ENCODE measurements at regions of chr17 and their contacts with region 1.

Region 1: DNA sequence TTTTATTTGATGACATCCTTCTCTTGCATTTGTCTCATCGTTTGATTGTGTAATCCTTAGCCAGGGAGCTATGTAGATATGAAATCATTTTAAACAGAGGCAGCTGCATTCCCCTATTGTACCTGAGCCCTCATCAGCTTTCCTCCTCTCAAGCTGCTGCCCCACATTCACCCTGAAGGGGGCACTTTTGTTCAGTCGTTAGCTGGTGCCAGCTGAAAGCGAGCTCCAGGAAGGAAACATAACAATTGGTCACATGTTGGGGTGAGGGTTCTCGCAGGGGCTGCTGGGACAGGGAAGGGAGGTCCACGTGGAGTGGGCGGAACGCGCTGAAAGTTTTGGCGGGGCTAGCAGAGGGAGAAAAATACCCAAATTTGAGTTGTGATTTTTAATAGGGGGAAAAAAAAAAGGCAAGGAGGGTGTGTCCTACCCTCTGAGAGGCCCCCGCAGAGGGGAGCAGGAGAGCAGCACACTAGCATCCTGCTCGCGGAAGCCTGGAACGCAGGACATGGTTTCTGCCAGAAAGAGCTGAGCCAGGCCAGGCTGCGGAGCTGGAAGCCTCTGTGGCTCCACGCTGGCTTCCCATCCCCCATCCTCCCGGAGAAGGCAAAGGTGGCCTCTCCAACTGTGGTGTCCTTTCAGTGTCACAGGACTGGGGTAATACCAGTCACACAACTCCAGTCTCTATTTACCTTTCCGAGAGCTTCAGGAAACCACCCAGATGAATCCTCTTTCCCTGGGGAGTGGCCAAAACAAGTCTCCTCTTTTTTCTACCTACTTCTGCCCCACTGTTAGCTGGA is 8.5 kb upstream of the MSL1 start:
- DNase-seq: peak; percentile 93
- H3K4me3 ChIP-seq: peak overlapping the region; percentile 26 to 43 (median 34)
- H3K27ac ChIP-seq: peak overlapping the region; percentile 70
- H3K4me1 ChIP-seq: peaks cover 45% of the 10 kb centered on the region
- H3K27me3 ChIP-seq: no peaks in the 10 kb centered on the region
- CTCF ChIP-seq: peak; percentile 51 to 90

Region 2: DNA sequence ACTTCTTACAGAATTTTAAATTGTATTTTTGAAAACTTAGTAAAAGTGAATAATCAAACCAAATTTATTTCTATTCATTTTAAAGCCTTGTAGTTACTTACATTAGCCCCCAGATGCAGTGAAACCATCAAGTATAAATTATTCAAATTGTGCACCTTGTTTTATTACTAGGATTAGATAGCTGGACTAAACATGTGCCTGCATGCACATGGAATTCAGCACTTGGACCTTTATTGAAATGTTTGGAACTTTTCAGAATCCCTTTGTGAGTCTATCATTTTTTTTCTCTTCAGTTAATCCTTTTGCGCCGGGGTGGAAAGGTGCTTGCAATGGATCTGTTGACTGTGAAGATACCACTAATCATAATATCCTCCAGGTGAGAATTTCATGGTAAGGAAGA is 240.6 kb before region 1 on chr17:
- CTCF ChIA-PET with region 1: no interaction called
- dilution Hi-C with region 1: no loop called
- in situ Hi-C with region 1: no loop called
- intact Hi-C with region 1: loop called (anchors 1 kb)
- DNase-seq: peak; percentile 32
- H3K4me3 ChIP-seq: no peak overlapping the region
- H3K27ac ChIP-seq: no peak overlapping the region
- H3K4me1 ChIP-seq: peaks cover 5% of the 10 kb centered on the region
- H3K27me3 ChIP-seq: peaks cover 8% of the 10 kb centered on the region
- CTCF ChIP-seq: peak; percentile 51 to 62

Region 3: DNA sequence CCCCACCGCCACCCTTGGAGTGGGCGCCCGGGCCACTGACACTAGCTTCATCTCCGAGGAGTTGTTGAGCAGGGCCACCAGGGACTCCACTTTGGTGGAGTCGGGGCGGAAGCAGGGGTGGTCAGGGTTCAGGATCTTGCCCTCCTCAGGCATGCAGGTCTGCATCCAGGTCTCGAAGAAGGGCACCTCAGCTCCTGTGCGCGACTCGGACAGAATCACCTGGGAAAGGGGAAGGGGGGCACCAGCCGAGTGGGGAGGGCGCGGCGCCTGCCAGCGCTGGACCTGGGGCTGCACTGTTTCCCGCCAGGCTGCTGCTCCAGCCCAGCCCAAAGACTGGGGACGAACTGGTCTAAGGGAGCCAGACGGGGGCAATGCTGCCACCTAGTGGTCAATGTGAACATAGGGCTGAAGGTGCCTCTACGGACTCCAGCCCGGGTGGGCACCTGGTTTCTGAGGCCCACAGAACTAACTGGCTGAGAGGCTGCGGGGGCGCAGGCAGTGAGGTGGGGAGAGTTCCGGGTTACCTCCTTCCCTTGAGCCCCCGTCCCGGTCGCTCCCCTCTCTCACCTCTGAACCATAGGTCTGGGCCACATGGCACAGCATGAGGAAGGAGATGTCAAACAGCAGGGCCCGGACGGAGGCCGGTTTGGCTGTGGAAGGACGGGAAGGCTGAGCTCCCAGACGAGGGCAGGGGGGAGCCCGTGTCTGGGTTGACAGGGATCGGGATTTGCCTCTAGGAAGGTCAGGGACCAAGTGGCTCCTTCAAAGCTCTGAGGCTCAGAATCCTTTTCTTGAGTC is 86.3 kb before region 1 on chr17:
- CTCF ChIA-PET with region 1: interaction called, 4 read pairs
- dilution Hi-C with region 1: no loop called
- in situ Hi-C with region 1: no loop called
- intact Hi-C with region 1: loop called (anchors 1 kb)
- DNase-seq: peak; percentile 76
- H3K4me3 ChIP-seq: no peak overlapping the region
- H3K27ac ChIP-seq: peak overlapping the region; percentile 87
- H3K4me1 ChIP-seq: peaks cover 60% of the 10 kb centered on the region
- H3K27me3 ChIP-seq: no peaks in the 10 kb centered on the region
- CTCF ChIP-seq: peak; percentile 77 to 91

Region 4: GRCh38 chr17:40062329-40063186 is 50.8 kb before region 1 on chr17 and contains the start of gene THRA:
- CTCF ChIA-PET with region 1: no interaction called
- dilution Hi-C with region 1: no loop called
- in situ Hi-C with region 1: no loop called
- intact Hi-C with region 1: loop called (anchors 1 kb)
- DNase-seq: no peak
- H3K4me3 ChIP-seq: peak within 1 kb of the TSS; percentile 94 to 96 (median 94)
- H3K27ac ChIP-seq: peak within 1 kb of the TSS; percentile 52
- H3K4me1 ChIP-seq: peaks cover 20% of the 10 kb centered on the region
- H3K27me3 ChIP-seq: no peaks in the 10 kb centered on the region
- CTCF ChIP-seq: peak in 1 of 2 donors; percentile 13
- total RNA-seq, gene THRA: 10.8 to 11.7 TPM

Region 5: DNA sequence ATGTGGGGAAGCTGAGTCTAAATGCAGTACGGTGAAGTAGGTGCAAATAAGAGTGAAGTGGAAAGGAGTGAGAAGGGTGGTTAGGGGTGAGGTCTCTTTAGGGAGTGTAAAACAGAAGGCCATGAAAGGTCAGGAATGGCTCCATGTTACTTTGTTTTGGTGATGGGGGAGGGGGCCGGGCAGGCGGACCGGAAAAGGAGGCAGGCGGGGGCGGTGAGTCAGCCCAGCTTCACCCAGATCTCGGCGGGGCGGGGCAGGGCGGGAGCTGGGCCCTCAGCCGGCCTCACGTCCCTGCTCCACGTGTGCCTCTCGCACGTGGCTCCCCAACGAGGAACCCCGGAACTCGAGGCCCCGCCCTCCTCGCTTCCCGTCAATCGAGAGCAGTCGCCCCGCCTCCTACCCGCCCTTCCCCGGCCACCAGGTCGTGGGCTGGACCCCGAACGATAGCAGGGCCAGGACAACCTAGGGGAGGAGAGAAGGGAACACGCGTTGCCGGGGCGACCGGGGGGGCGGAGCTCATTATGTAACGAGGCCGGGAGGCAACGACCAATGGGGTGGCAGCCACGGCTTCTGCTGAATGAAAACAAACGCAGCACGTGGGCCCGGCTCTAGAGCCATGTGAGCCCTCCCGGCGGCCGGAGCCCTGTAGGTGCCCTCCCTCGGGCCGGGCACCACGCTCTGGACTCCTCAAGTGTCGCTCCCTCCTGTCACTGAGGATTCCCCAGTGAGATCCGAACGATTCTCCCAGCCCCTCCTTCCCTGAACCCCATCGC is 14.3 kb before region 1 on chr17:
- CTCF ChIA-PET with region 1: interaction called, 12 read pairs
- dilution Hi-C with region 1: no loop called
- in situ Hi-C with region 1: no loop called
- intact Hi-C with region 1: loop called (anchors 1 kb)
- DNase-seq: peak; percentile 100
- H3K4me3 ChIP-seq: peak overlapping the region; percentile 75 to 99 (median 87)
- H3K27ac ChIP-seq: peak overlapping the region; percentile 96
- H3K4me1 ChIP-seq: peaks cover 31% of the 10 kb centered on the region
- H3K27me3 ChIP-seq: no peaks in the 10 kb centered on the region
- CTCF ChIP-seq: no peak

Region 6: DNA sequence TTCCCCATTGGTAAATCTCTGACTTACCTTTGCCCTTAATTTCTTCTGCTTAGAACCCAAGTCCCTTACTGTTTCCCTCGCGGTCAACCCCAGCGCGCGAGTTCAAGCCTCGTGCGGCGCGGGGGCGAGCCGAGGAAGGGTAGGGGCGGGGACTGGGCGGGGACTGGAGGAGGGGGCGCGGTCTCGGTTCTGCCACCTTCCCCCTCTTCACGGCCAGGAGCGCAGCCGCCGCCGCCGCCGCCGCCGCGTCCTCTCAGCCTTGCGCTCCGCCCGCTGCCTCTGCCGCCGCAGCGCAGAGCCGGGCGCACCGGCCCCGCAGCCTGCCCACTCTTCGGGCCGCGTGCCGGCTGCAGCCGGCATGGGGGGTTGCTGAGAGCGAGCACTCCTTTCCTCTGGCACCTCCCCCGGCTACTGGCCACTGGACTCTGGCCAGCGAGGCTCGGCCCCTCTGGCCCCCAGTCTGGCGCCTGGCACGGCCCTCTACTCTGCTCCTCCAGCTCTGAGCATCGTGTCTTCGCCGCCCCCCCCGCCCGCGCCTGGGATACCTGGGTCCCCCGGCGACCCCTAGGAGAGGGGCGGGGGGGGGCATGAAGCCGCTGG is 64.1 kb after region 1 on chr17 and contains the start of gene RAPGEFL1:
- CTCF ChIA-PET with region 1: no interaction called
- dilution Hi-C with region 1: loop called (anchors 10 kb)
- in situ Hi-C with region 1: no loop called
- intact Hi-C with region 1: no loop called
- DNase-seq: peak; percentile 73
- H3K4me3 ChIP-seq: peak within 1 kb of the TSS; percentile 60 to 80 (median 65)
- H3K27ac ChIP-seq: peak within 1 kb of the TSS; percentile 85
- H3K4me1 ChIP-seq: peaks cover 47% of the 10 kb centered on the region
- H3K27me3 ChIP-seq: no peaks in the 10 kb centered on the region
- CTCF ChIP-seq: no peak
- total RNA-seq, gene RAPGEFL1: 19.7 to 25.2 TPM

Region 7: GRCh38 chr17:40287494-40288369 is 174.4 kb after region 1 on chr17 and contains the start of gene CDC6:
- CTCF ChIA-PET with region 1: interaction called, 6 read pairs
- dilution Hi-C with region 1: no loop called
- in situ Hi-C with region 1: no loop called
- intact Hi-C with region 1: loop called (anchors 1 kb)
- DNase-seq: peak; percentile 99
- H3K4me3 ChIP-seq: peak within 1 kb of the TSS; percentile 53 to 84 (median 70)
- H3K27ac ChIP-seq: peak within 1 kb of the TSS; percentile 88
- H3K4me1 ChIP-seq: peaks cover 38% of the 10 kb centered on the region
- H3K27me3 ChIP-seq: no peaks in the 10 kb centered on the region
- CTCF ChIP-seq: no peak
- total RNA-seq, gene CDC6: 5.2 to 61.8 TPM

Measured in mammary epithelial cell (primary cell).